ENCODE measurements at regions of chr1 and their contacts with region 1.

Region 1: GRCh38 chr1:234638832-234639799 is 29.1 kb upstream of the IRF2BP2 start:
- DNase-seq: peak; percentile 98
- ATAC-seq: peak; percentile 87
- H3K4me3 ChIP-seq: peak overlapping the region in 1 of 3 experiments; percentile 13; a peak in 1 of 6 replicates
- H3K27ac ChIP-seq: peak overlapping the region; percentile 84
- H3K4me1 ChIP-seq: peaks cover 81% of the 10 kb centered on the region
- H3K27me3 ChIP-seq: no peaks in the 10 kb centered on the region
- CTCF ChIP-seq: 0 out of 2 replicates have a peak, but pooled peaks have one; percentile 2
- EP300 ChIP-seq: peak in 1 of 2 experiments; percentile 92; a peak in 2 of 4 replicates
- POLR2A ChIP-seq: peak; percentile 44 to 73; a peak in 3 of 4 replicates
- RAD21 ChIP-seq: peak; percentile 50; the same call in 1 of the 2 replicates

Region 2: GRCh38 chr1:234617131-234617985 is 21.8 kb before region 1 on chr1:
- CTCF ChIA-PET with region 1: no interaction called
- POLR2A ChIA-PET with region 1: interaction called, 106 read pairs
- in situ Hi-C with region 1: no loop called
- intact Hi-C with region 1: loop called (anchors 1 kb)
- DNase-seq: no peak
- ATAC-seq: no peak
- H3K4me3 ChIP-seq: no peak overlapping the region
- H3K27ac ChIP-seq: peak overlapping the region; percentile 99
- H3K4me1 ChIP-seq: peaks cover 97% of the 10 kb centered on the region
- H3K27me3 ChIP-seq: no peaks in the 10 kb centered on the region
- CTCF ChIP-seq: no peak
- EP300 ChIP-seq: no peak
- POLR2A ChIP-seq: no peak
- RAD21 ChIP-seq: no peak

Region 3: DNA sequence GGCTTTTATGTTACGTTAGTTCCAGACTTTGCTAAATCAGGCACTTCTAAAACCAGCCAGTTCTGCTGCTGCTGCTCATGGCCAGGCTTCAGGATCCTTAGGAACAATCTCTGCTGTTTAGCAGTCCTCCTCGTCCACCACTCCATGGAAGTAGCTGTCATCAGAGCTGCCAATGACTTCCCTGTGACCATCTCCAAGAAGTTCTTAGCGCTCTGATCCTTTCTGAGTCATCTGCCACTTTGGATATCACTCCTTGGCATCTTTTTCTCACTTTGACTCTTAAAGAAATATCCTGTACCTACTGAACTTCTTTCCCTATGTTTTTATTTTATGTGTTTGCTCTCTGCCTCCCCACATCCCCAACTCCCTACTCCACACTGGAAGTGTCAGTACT is 14.4 kb before region 1 on chr1:
- CTCF ChIA-PET with region 1: no interaction called
- POLR2A ChIA-PET with region 1: interaction called, 42 read pairs
- in situ Hi-C with region 1: no loop called
- intact Hi-C with region 1: loop called (anchors 2 kb)
- DNase-seq: no peak
- ATAC-seq: no peak
- H3K4me3 ChIP-seq: no peak overlapping the region; a peak in 1 of 6 replicates
- H3K27ac ChIP-seq: peak overlapping the region; percentile 99
- H3K4me1 ChIP-seq: peaks cover 96% of the 10 kb centered on the region
- H3K27me3 ChIP-seq: no peaks in the 10 kb centered on the region
- CTCF ChIP-seq: no peak
- EP300 ChIP-seq: no peak
- POLR2A ChIP-seq: no peak
- RAD21 ChIP-seq: no peak

Region 4: DNA sequence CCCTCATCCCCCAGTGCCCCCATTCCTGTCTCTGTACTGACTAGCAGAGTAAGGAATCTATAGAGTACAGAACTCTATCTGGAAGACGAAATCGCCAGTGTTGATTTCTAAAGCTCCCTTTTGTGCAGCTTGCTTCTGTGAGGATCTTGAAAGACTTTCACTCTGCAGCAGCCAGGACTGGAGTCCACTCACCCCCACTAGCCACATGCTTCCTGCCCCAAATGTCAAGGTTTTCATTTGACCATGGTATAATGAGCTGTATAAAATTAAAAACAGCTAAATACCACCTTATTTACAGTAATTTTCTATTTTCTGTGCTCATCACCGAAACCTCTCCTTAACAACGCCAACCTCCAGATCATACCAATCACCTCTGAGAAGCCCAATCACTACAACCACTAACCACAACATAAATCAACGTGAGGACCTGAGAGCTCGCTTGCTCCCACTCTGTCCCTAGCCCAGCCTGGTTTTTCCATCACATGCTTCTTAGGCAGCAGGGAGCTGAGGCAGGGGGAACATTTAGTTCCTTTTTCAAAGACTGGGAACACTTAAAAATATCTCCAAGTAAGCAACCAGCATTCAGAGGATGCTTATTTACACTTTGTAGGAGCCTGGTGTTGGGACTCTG is 27.0 kb after region 1 on chr1:
- CTCF ChIA-PET with region 1: no interaction called
- POLR2A ChIA-PET with region 1: no interaction called
- in situ Hi-C with region 1: no loop called
- intact Hi-C with region 1: no loop called
- DNase-seq: no peak
- ATAC-seq: no peak
- H3K4me3 ChIP-seq: no peak overlapping the region
- H3K27ac ChIP-seq: no peak overlapping the region
- H3K4me1 ChIP-seq: peaks cover 45% of the 10 kb centered on the region
- H3K27me3 ChIP-seq: no peaks in the 10 kb centered on the region
- CTCF ChIP-seq: no peak
- EP300 ChIP-seq: no peak
- POLR2A ChIP-seq: no peak
- RAD21 ChIP-seq: no peak

Region 5: DNA sequence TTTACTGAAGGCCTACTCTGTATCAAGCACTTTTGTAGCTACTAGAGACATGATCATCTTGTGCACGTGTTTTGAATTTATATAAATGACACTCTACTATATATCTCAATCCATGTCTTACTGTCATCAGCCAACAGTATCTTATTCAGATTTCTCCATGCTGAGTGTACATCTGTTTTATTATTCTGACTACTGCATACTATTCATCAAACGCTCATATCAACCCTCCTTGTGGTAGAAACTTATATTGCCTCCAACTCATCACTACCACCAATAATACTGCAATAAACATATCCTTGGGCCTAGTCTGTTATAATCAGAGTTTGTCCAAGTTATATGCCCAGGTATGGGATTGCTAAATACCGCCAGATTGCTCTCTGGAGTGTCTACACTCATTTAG is 52.5 kb after region 1 on chr1:
- CTCF ChIA-PET with region 1: no interaction called
- POLR2A ChIA-PET with region 1: no interaction called
- in situ Hi-C with region 1: no loop called
- intact Hi-C with region 1: no loop called
- DNase-seq: no peak
- ATAC-seq: no peak
- H3K4me3 ChIP-seq: no peak overlapping the region
- H3K27ac ChIP-seq: no peak overlapping the region
- H3K4me1 ChIP-seq: 0 out of 2 replicates have a peak, but pooled peaks cover 2% of the 10 kb centered on the region
- H3K27me3 ChIP-seq: no peaks in the 10 kb centered on the region
- CTCF ChIP-seq: no peak
- EP300 ChIP-seq: no peak
- POLR2A ChIP-seq: no peak
- RAD21 ChIP-seq: no peak

Region 6: GRCh38 chr1:235067263-235068172 is 428.4 kb after region 1 on chr1:
- CTCF ChIA-PET with region 1: no interaction called
- POLR2A ChIA-PET with region 1: interaction called, 13 read pairs
- in situ Hi-C with region 1: no loop called
- intact Hi-C with region 1: no loop called
- DNase-seq: peak; percentile 58
- ATAC-seq: peak; percentile 4; the same call in 2 of the 3 replicates
- H3K4me3 ChIP-seq: peak overlapping the region; percentile 41 to 76 (median 60); a peak in 5 of 6 replicates
- H3K27ac ChIP-seq: peak overlapping the region; percentile 86
- H3K4me1 ChIP-seq: peaks cover 97% of the 10 kb centered on the region
- H3K27me3 ChIP-seq: no peaks in the 10 kb centered on the region
- CTCF ChIP-seq: no peak
- EP300 ChIP-seq: no peak
- POLR2A ChIP-seq: peak in 1 of 2 experiments; percentile 21; a peak in 2 of 4 replicates
- RAD21 ChIP-seq: no peak

Measured in HepG2 (cell line).